Naive thymus-derived CD8-positive, alpha-beta T cell (primary cell): ENCODE measurements at regions of chr19 and their contacts with region 1.

Region 1: DNA sequence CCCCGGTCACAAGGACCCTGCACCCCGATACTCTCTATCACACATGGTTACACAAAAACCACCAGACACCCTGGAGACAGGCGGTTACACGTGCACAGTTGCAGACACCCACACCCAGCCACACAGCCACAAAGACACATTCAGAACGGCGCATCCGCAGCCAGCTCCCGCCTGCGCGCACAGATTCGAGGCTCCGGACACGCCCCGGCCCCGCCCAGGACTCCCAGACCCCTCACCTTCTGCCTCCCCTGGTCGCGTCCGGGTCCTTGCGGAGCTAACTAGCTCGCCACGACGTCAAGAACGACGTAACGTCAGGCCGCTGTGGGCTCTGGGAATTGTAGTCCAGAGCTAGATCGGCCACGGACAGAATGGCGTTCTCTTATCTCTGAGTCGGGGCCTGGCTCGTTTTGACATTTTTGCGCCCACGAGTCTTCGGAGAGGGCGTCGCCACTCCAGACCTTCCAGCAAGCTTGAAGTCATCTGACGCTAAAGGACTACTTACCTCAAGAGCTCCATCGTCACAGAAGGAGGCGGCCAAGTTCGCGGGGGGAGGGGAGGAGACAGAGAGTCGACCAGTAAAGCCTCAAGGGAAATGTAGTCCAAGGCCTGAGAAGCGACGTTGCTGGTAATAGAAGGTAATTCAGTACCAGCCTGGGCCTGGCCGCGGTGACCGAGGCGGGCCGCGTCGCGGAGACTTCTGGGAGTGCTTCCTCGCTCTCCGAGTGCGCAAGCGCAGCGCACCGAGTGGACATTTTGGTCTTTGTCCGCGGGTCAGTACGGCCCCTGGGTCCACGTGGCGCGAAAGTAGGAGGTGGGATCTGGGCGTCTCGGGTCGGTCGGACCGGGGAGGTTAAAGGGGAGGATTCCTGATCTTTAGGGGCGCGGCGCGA is at the starts of genes ZNF146 and ZNF565:
- DNase-seq: peak; percentile 89 to 98 (median 96)
- ATAC-seq: peak; percentile 86 to 89
- H3K4me3 Mint-ChIP-seq: no peak within 1 kb of the TSS
- H3K27ac Mint-ChIP-seq: peak within 1 kb of the TSS in 3 of 10 donors; percentile 49 to 78 (median 77)
- H3K4me1 Mint-ChIP-seq: peaks cover 12 to 33% (median 26%) of the 10 kb centered on the region in 4 donors
- H3K27me3 Mint-ChIP-seq: no peaks in the 10 kb centered on the region
- polyA plus RNA-seq, gene ZNF146: 51.4 to 88.6 (median 67.9) TPM
- polyA plus RNA-seq, gene ZNF565: 1.7 to 4.8 (median 2.5) TPM

Region 2: GRCh38 chr19:36114763-36115452 is 99.7 kb before region 1 on chr19 and contains the start of gene POLR2I:
- POLR2A ChIA-PET with region 1: interaction called, 16 read pairs
- DNase-seq: peak; percentile 97 to 100 (median 99)
- ATAC-seq: peak; percentile 88 to 89
- H3K4me3 Mint-ChIP-seq: peak within 1 kb of the TSS; percentile 83 to 99 (median 94)
- H3K27ac Mint-ChIP-seq: peak within 1 kb of the TSS; percentile 93 to 99 (median 98)
- H3K4me1 Mint-ChIP-seq: peaks cover 20 to 59% (median 51%) of the 10 kb centered on the region in 4 donors
- H3K27me3 Mint-ChIP-seq: peaks cover 0 to 4% (median 0%) of the 10 kb centered on the region in 5 donors
- polyA plus RNA-seq, gene POLR2I: 124 to 168 (median 149) TPM

Region 3: GRCh38 chr19:36139473-36140303 is 74.9 kb before region 1 on chr19 and contains the start of gene CAPNS1:
- POLR2A ChIA-PET with region 1: interaction called, 11 read pairs
- DNase-seq: peak; percentile 86 to 95 (median 90)
- ATAC-seq: peak; percentile 67 to 70
- H3K4me3 Mint-ChIP-seq: peak within 1 kb of the TSS; percentile 92 to 96 (median 95)
- H3K27ac Mint-ChIP-seq: peak within 1 kb of the TSS; percentile 82 to 97 (median 95)
- H3K4me1 Mint-ChIP-seq: peaks cover 12 to 22% (median 19%) of the 10 kb centered on the region in 4 donors
- H3K27me3 Mint-ChIP-seq: no peaks in the 10 kb centered on the region
- polyA plus RNA-seq, gene CAPNS1: 93.4 to 137 (median 100.0) TPM

Region 4: GRCh38 chr19:36196249-36196648 is 18.4 kb before region 1 on chr19:
- POLR2A ChIA-PET with region 1: no interaction called
- DNase-seq: no peak
- ATAC-seq: no peak
- H3K4me3 Mint-ChIP-seq: no peak overlapping the region
- H3K27ac Mint-ChIP-seq: no peak overlapping the region
- H3K4me1 Mint-ChIP-seq: peaks cover 0 to 2% (median under 1%) of the 10 kb centered on the region in 4 donors
- H3K27me3 Mint-ChIP-seq: no peaks in the 10 kb centered on the region

Region 5: DNA sequence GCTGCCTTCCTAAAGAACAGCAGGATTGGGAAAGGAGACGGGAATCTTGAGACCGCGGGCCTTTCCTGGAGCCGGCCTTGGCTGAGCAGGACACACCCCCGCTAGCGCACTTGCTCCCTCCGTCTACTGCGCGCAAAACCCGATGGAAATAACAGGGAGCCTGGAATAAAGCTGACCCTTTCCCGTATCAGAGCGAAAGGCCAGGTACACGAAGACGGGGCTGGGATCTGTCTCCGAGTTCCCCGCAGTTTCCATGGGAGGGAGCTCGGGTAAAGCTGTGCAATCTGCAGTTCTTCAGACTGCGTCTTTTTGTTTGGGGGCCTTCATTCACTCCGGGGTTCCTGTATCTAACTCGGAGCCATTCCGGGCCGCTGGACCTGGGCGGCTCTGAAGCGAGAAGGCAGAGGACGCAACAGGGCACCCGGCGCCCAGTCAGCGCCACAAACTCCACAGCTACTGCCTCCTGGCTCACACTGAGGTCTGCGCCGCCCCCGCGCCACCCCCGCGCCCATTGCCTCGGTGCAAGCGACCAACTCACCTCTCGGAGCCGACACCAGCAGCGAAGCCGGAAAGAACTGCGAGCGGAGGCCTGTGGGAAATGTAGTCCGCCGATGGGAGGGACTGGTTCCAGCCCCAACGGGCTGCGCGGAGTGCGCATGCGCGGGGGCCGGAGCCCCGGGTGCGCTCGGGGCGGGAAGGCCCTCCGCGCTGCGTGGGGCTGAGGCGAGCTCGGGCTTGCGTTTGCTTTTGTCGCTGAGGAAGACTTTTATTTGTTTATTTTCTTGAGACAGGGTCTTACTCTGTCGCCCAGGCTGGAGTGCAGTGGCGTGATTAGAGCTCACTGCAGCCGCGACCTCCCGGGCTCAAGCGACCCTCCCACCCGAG is 164.2 kb after region 1 on chr19 and contains the start of gene ZFP14:
- POLR2A ChIA-PET with region 1: interaction called, 12 read pairs
- DNase-seq: peak; percentile 91 to 97 (median 94)
- ATAC-seq: peak; percentile 96 to 98
- H3K4me3 Mint-ChIP-seq: peak within 1 kb of the TSS; percentile 89 to 98 (median 96)
- H3K27ac Mint-ChIP-seq: peak within 1 kb of the TSS; percentile 76 to 99 (median 97)
- H3K4me1 Mint-ChIP-seq: peaks cover 11 to 27% (median 22%) of the 10 kb centered on the region in 4 donors
- H3K27me3 Mint-ChIP-seq: no peaks in the 10 kb centered on the region
- polyA plus RNA-seq, gene ZFP14: 3.4 to 5.5 (median 4.6) TPM

Region 6: GRCh38 chr19:36528194-36528920 is 313.7 kb after region 1 on chr19 and contains the start of gene ZNF260:
- POLR2A ChIA-PET with region 1: interaction called, 12 read pairs
- DNase-seq: peak; percentile 84 to 95 (median 90)
- ATAC-seq: peak; percentile 89
- H3K4me3 Mint-ChIP-seq: peak within 1 kb of the TSS; percentile 94 to 100 (median 98)
- H3K27ac Mint-ChIP-seq: peak within 1 kb of the TSS; percentile 93 to 99 (median 98)
- H3K4me1 Mint-ChIP-seq: peaks cover 19 to 32% (median 24%) of the 10 kb centered on the region in 4 donors
- H3K27me3 Mint-ChIP-seq: no peaks in the 10 kb centered on the region
- polyA plus RNA-seq, gene ZNF260: 5.5 to 9.8 (median 8.2) TPM

Region 7: GRCh38 chr19:37217855-37218591 is 1003.4 kb after region 1 on chr19 and contains the start of gene ZNF383:
- POLR2A ChIA-PET with region 1: interaction called, 10 read pairs
- DNase-seq: peak; percentile 60 to 93 (median 80)
- ATAC-seq: peak; percentile 86 to 89
- H3K4me3 Mint-ChIP-seq: peak within 1 kb of the TSS; percentile 86 to 100 (median 96)
- H3K27ac Mint-ChIP-seq: peak within 1 kb of the TSS; percentile 90 to 99 (median 95)
- H3K4me1 Mint-ChIP-seq: peaks cover 17 to 34% (median 27%) of the 10 kb centered on the region in 4 donors
- H3K27me3 Mint-ChIP-seq: no peaks in the 10 kb centered on the region
- polyA plus RNA-seq, gene ZNF383: 8.8 to 15.1 (median 10.4) TPM